Esophagus muscularis mucosa (tissue), 4 donors: ENCODE measurements at regions of chr19 and their contacts with region 1.

Region 1: GRCh38 chr19:39187559-39187957 is 9.2 kb upstream of the NCCRP1 start:
- DNase-seq: no peak
- H3K4me3 ChIP-seq: no peak overlapping the region
- H3K27ac ChIP-seq: no peak overlapping the region
- H3K4me1 ChIP-seq: peaks cover 0 to 8% (median 0%) of the 10 kb centered on the region in 4 donors
- H3K27me3 ChIP-seq: peaks cover 0 to 21% (median 0%) of the 10 kb centered on the region in 4 donors
- CTCF ChIP-seq: peak in 2 of 3 experiments; percentile 0 to 23
- EP300 ChIP-seq: no peak
- POLR2A ChIP-seq: no peak

Region 2: GRCh38 chr19:39125554-39126311 is 61.8 kb before region 1 on chr19 and contains the start of gene PAK4:
- intact Hi-C with region 1: loop called (anchors 1 kb)
- DNase-seq: peak; percentile 99
- H3K4me3 ChIP-seq: peak within 1 kb of the TSS; percentile 81 to 97 (median 90)
- H3K27ac ChIP-seq: peak within 1 kb of the TSS; percentile 75 to 86 (median 82)
- H3K4me1 ChIP-seq: peaks cover 51 to 72% (median 65%) of the 10 kb centered on the region in 4 donors
- H3K27me3 ChIP-seq: peaks cover 0 to 10% (median 0%) of the 10 kb centered on the region in 4 donors
- CTCF ChIP-seq: peak in 1 of 3 experiments; percentile 18
- EP300 ChIP-seq: no peak
- POLR2A ChIP-seq: no peak
- total RNA-seq, gene PAK4: 8.3 to 18.4 (median 11.0) TPM

Region 3: GRCh38 chr19:40724855-40725254 is 1537.3 kb after region 1 on chr19:
- intact Hi-C with region 1: no loop called
- DNase-seq: no peak
- H3K4me3 ChIP-seq: no peak overlapping the region
- H3K27ac ChIP-seq: peak overlapping the region in 2 of 4 donors; percentile 13 to 39
- H3K4me1 ChIP-seq: peaks cover 21 to 55% (median 53%) of the 10 kb centered on the region in 4 donors
- H3K27me3 ChIP-seq: no peaks in the 10 kb centered on the region
- CTCF ChIP-seq: no peak
- EP300 ChIP-seq: no peak
- POLR2A ChIP-seq: no peak